ENCODE measurements at regions of chr22 and their contacts with region 1.

Region 1: DNA sequence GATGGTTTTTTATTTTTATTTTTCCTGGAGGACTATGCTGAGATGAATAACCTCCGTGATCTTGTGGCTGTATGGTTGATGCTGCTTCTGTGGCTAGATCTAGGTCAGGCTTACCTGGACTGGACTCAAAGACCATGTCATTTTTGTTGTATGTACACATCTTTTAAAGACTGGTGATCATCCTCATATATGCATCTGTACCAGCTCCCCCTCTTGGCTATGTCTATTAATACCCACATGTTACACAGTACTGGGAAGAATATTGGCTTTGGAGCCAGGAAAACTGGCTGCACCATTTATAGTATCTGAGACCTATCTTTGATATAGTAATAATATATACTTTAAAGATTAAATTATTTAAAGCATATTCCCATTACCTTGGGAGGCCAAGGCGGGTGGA is 18.4 kb upstream of the PITPNB start:
- DNase-seq: no peak
- ATAC-seq: no peak
- H3K4me3 ChIP-seq: no peak overlapping the region
- H3K27ac ChIP-seq: no peak overlapping the region
- H3K4me1 ChIP-seq: no peaks in the 10 kb centered on the region
- H3K27me3 ChIP-seq: no peaks in the 10 kb centered on the region
- CTCF ChIP-seq: no peak; a peak in 1 of 6 replicates
- EP300 ChIP-seq: no peak
- POLR2A ChIP-seq: no peak
- RAD21 ChIP-seq: no peak

Region 2: GRCh38 chr22:27913162-27913741 is 24.2 kb before region 1 on chr22:
- CTCF ChIA-PET with region 1: interaction called, 12 read pairs
- POLR2A ChIA-PET with region 1: no interaction called
- RAD21 ChIA-PET with region 1: no interaction called
- SMC1A ChIA-PET with region 1: interaction called, 6 read pairs
- in situ Hi-C with region 1: no loop called
- intact Hi-C with region 1: no loop called
- DNase-seq: no peak
- ATAC-seq: peak; percentile 71
- H3K4me3 ChIP-seq: no peak overlapping the region
- H3K27ac ChIP-seq: no peak overlapping the region
- H3K4me1 ChIP-seq: peaks cover 9% of the 10 kb centered on the region; the same call in 1 of the 2 replicates
- H3K27me3 ChIP-seq: no peaks in the 10 kb centered on the region
- CTCF ChIP-seq: no peak
- EP300 ChIP-seq: no peak
- POLR2A ChIP-seq: no peak
- RAD21 ChIP-seq: no peak

Region 3: DNA sequence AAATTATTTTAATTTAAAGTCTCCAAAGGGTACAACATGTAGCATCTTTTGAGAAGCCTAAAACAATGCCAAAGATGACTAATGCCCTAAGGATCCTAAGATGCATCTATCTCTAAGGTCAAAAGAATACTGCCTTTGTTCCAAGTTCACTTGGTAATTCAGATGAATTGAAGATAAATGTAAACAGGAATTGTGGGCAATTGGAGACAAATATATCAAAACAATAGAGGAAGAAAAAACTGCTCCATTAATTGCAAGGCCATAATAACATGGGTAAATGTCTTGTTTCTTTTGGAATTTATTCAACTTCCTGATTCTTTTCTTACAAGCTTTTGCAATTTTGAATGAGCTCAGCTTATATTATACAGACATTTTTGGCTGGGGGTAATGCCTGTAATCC is 403.5 kb after region 1 on chr22:
- CTCF ChIA-PET with region 1: no interaction called
- POLR2A ChIA-PET with region 1: no interaction called
- RAD21 ChIA-PET with region 1: no interaction called
- SMC1A ChIA-PET with region 1: no interaction called
- in situ Hi-C with region 1: no loop called
- intact Hi-C with region 1: no loop called
- DNase-seq: no peak
- ATAC-seq: no peak
- H3K4me3 ChIP-seq: no peak overlapping the region
- H3K27ac ChIP-seq: no peak overlapping the region
- H3K4me1 ChIP-seq: no peaks in the 10 kb centered on the region
- H3K27me3 ChIP-seq: no peaks in the 10 kb centered on the region
- CTCF ChIP-seq: no peak
- EP300 ChIP-seq: no peak
- POLR2A ChIP-seq: no peak
- RAD21 ChIP-seq: no peak

Measured in GM12878 (cell line).